ENCODE measurements at regions of chr1 and their contacts with region 1.

Region 1: GRCh38 chr1:94335950-94336349 is 82.2 kb upstream of the ABCD3 start:
- DNase-seq: peak; percentile 51
- H3K4me3 ChIP-seq: peak overlapping the region in 1 of 2 experiments; percentile 46; a peak in 1 of 4 replicates
- H3K27ac ChIP-seq: no peak overlapping the region
- H3K4me1 ChIP-seq: peaks cover 6 to 11% of the 10 kb centered on the region in 2 experiments; a peak in 3 of 4 replicates
- H3K27me3 ChIP-seq: 0 out of 2 replicates have a peak, but pooled peaks cover 4% of the 10 kb centered on the region
- CTCF ChIP-seq: peak; percentile 99
- EP300 ChIP-seq: no peak
- RAD21 ChIP-seq: peak; percentile 100

Region 2: DNA sequence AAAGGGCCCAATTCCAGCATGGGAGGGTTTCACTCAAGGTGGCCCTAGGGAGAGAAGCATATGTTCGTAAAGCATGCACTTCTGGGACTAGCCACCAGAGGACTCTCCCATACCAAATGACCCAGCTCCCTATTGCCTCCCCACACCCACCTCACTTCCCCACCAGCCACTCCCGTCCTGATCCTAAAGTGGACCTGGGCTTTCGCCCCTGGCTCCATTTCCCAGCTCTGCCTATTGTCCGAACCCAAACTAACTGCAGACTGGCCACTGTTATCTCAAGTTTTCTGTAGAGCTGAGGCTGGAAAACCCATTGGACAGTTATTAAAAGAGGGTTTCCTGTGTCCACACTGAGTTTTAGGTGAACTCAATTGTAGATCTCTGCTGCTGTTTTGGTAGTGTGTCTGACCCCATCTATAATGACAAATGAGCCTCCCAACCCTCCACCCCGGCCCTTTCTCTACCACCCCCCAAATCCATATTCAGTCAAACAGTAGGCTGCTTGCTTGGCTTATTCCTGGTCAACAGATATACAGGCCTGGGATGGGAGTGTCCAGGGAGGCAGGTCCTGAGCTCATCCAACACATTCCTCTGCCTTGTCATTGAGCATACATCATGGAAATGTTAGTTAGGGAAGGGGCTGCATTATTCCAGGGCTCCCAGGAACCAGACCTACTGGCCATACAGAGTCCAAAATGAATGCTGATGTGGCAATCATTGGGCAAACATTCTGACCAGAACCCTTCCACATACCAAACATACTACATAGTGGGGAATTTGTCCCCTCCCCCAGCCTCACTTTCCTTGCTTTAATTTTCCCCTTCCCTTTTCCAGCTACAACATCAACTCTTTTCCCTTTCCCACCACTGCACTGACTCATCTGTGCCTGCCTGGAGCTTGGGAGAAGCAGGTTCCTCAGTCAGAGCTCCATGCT is 274.2 kb before region 1 on chr1:
- CTCF ChIA-PET with region 1: interaction called, 427 read pairs
- POLR2A ChIA-PET with region 1: interaction called, 3 read pairs
- DNase-seq: peak; percentile 79
- H3K4me3 ChIP-seq: no peak overlapping the region; a peak in 1 of 4 replicates
- H3K27ac ChIP-seq: no peak overlapping the region
- H3K4me1 ChIP-seq: peaks cover 0 to 10% of the 10 kb centered on the region in 2 experiments; a peak in 2 of 4 replicates
- H3K27me3 ChIP-seq: no peaks in the 10 kb centered on the region
- CTCF ChIP-seq: peak; percentile 82
- EP300 ChIP-seq: no peak
- RAD21 ChIP-seq: peak; percentile 94

Region 3: DNA sequence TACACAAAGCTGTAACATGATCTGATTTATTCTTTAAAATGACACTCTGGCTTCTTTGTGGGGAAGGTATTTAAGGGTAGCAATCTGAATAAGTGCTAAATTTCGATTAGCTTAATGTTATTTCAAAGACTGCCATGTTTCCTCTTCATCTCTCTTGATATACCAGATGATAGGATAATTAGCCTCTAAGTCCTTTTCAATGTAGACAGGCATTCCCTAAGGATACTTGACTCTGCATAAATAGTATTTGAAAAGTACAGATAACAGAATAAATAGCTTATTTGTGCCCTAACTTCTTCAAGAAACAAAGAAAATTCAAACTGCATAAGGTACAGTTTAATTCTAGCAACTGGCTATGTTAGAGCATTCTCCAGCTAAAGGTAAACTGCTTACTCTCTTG is 144.7 kb before region 1 on chr1:
- CTCF ChIA-PET with region 1: interaction called, 11 read pairs
- POLR2A ChIA-PET with region 1: no interaction called
- DNase-seq: no peak
- H3K4me3 ChIP-seq: no peak overlapping the region
- H3K27ac ChIP-seq: no peak overlapping the region
- H3K4me1 ChIP-seq: no peaks in the 10 kb centered on the region
- H3K27me3 ChIP-seq: no peaks in the 10 kb centered on the region
- CTCF ChIP-seq: no peak
- EP300 ChIP-seq: no peak
- RAD21 ChIP-seq: no peak

Region 4: DNA sequence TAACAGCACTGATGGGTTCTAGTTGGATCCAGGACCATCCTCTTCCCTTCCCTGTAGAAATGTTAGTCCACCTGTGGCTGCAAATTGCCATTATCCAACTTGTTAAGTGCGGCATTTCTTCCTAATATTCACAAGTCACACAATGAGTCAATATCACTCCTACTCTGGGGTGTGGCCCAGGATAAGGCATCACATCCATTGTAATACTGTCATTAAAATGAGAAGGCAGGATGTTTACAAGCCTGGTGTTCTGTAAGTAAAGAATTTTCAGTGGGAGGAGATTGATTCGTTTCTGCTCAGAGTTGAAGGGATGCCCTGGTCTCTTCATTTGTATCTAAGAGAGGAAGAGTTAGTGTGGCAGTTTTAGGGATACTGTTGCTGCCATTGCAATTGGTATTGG is 80.5 kb before region 1 on chr1:
- CTCF ChIA-PET with region 1: interaction called, 19 read pairs
- POLR2A ChIA-PET with region 1: no interaction called
- DNase-seq: no peak
- H3K4me3 ChIP-seq: no peak overlapping the region
- H3K27ac ChIP-seq: no peak overlapping the region
- H3K4me1 ChIP-seq: peaks cover 7 to 15% of the 10 kb centered on the region in 2 experiments; a peak in 3 of 4 replicates
- H3K27me3 ChIP-seq: no peaks in the 10 kb centered on the region
- CTCF ChIP-seq: no peak
- EP300 ChIP-seq: no peak
- RAD21 ChIP-seq: no peak

Region 5: GRCh38 chr1:94305704-94306103 is 30.2 kb before region 1 on chr1:
- CTCF ChIA-PET with region 1: interaction called, 13 read pairs
- POLR2A ChIA-PET with region 1: no interaction called
- DNase-seq: no peak
- H3K4me3 ChIP-seq: no peak overlapping the region
- H3K27ac ChIP-seq: no peak overlapping the region
- H3K4me1 ChIP-seq: peaks cover 0 to 6% of the 10 kb centered on the region in 2 experiments; a peak in 1 of 4 replicates
- H3K27me3 ChIP-seq: no peaks in the 10 kb centered on the region
- CTCF ChIP-seq: no peak
- EP300 ChIP-seq: no peak
- RAD21 ChIP-seq: no peak

Region 6: GRCh38 chr1:94463765-94464330 is 127.9 kb after region 1 on chr1:
- CTCF ChIA-PET with region 1: interaction called, 15 read pairs
- POLR2A ChIA-PET with region 1: no interaction called
- DNase-seq: peak; percentile 4
- H3K4me3 ChIP-seq: no peak overlapping the region
- H3K27ac ChIP-seq: no peak overlapping the region
- H3K4me1 ChIP-seq: no peaks in the 10 kb centered on the region
- H3K27me3 ChIP-seq: no peaks in the 10 kb centered on the region
- CTCF ChIP-seq: peak; percentile 53
- EP300 ChIP-seq: no peak
- RAD21 ChIP-seq: peak; percentile 70

Measured in SK-N-SH (cell line).